ENCODE measurements at regions of chr19 and their contacts with region 1.

Region 1: GRCh38 chr19:38250821-38251563 is 5.2 kb downstream of the PPP1R14A start:
- DNase-seq: no peak
- H3K4me3 ChIP-seq: no peak overlapping the region
- H3K27ac ChIP-seq: no peak overlapping the region
- H3K4me1 ChIP-seq: peaks cover 0 to 37% (median 33%) of the 10 kb centered on the region in 4 experiments
- H3K27me3 ChIP-seq: no peaks in the 10 kb centered on the region

Region 2: GRCh38 chr19:38264486-38265212 is 13.7 kb after region 1 on chr19 and contains the start of gene SPINT2:
- CTCF ChIA-PET with region 1: interaction called, 11 read pairs
- POLR2A ChIA-PET with region 1: interaction called, 3 read pairs
- DNase-seq: peak; percentile 70 to 80 (median 79)
- H3K4me3 ChIP-seq: peak within 1 kb of the TSS; percentile 35 to 85 (median 81)
- H3K27ac ChIP-seq: peak within 1 kb of the TSS; percentile 64 to 80
- H3K4me1 ChIP-seq: peaks cover 3 to 58% (median 53%) of the 10 kb centered on the region in 4 experiments
- H3K27me3 ChIP-seq: no peaks in the 10 kb centered on the region

Region 3: DNA sequence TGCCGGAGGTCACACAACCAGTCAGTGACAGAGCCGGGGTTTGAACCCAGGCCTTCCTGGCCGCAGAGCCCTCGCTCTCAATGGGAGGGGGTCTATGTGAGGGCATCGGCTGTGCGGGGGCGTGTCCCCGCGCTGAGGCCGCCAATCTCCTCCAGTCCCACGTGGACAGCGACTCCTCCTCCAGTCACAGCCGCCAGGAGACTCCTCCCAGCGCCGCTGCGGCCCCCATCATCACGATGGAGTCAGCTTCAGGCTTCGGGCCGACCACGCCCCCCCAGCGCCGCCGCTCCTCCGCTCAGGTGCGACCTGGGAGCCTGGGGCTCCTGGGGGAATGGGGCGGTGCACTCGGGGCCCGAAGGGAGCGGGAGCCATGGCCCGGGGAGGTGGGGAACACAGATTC is 143.5 kb after region 1 on chr19:
- CTCF ChIA-PET with region 1: no interaction called
- POLR2A ChIA-PET with region 1: no interaction called
- DNase-seq: peak; percentile 62 to 78 (median 73)
- H3K4me3 ChIP-seq: peak overlapping the region in 3 of 7 experiments; percentile 13 to 16 (median 15)
- H3K27ac ChIP-seq: no peak overlapping the region
- H3K4me1 ChIP-seq: peaks cover 0 to 10% (median 7%) of the 10 kb centered on the region in 4 experiments
- H3K27me3 ChIP-seq: peaks cover 6 to 99% (median 51%) of the 10 kb centered on the region in 5 experiments